ENCODE measurements at regions of chr7 and their contacts with region 1.

Region 1: GRCh38 chr7:144127703-144128334 is 4.8 kb downstream of the OR2A14 start:
- DNase-seq: peak; percentile 70 to 87 (median 81)
- ATAC-seq: peak; percentile 99
- H3K4me3 ChIP-seq: no peak overlapping the region
- H3K4me3 Mint-ChIP-seq: no peak overlapping the region
- H3K27ac ChIP-seq: no peak overlapping the region
- H3K27ac Mint-ChIP-seq: no peak overlapping the region
- H3K4me1 ChIP-seq: no peaks in the 10 kb centered on the region
- H3K4me1 Mint-ChIP-seq: no peaks in the 10 kb centered on the region
- H3K27me3 ChIP-seq: no peaks in the 10 kb centered on the region
- H3K27me3 Mint-ChIP-seq: peaks cover 0 to 7% (median 0%) of the 10 kb centered on the region in 5 donors

Region 2: GRCh38 chr7:143490717-143491306 is 637.0 kb before region 1 on chr7:
- CTCF ChIA-PET with region 1: no interaction called
- POLR2A ChIA-PET with region 1: no interaction called
- intact Hi-C with region 1: loop called in 1 of 2 experiments (anchors 5 kb)
- DNase-seq: no peak
- ATAC-seq: no peak
- H3K4me3 ChIP-seq: no peak overlapping the region
- H3K4me3 Mint-ChIP-seq: no peak overlapping the region
- H3K27ac ChIP-seq: no peak overlapping the region
- H3K27ac Mint-ChIP-seq: peak overlapping the region in 1 of 9 donors; percentile 6
- H3K4me1 ChIP-seq: no peaks in the 10 kb centered on the region
- H3K4me1 Mint-ChIP-seq: peaks cover 8 to 31% (median 21%) of the 10 kb centered on the region in 7 donors
- H3K27me3 ChIP-seq: no peaks in the 10 kb centered on the region
- H3K27me3 Mint-ChIP-seq: peaks cover 0 to 2% (median 0%) of the 10 kb centered on the region in 5 donors

Region 3: DNA sequence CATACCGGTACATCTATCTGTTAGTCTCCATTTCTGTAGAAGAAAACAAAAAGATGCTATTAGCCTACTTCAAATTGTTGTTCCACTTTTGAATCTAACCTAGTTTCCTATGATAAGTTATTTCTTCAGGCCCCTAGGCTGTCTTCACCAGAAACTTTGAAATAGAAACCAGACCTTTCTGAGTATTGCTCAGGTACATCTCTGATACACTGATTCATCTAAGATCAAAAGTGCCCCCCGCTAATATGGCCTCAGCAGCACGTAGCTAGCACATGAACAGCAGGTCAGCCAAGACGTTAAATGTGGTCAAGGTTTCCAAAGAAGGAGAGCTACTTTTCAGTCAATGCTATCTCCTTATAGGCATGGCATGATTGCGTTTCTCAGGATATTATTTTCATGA is 393.9 kb before region 1 on chr7:
- CTCF ChIA-PET with region 1: interaction called, 6 read pairs
- POLR2A ChIA-PET with region 1: no interaction called
- intact Hi-C with region 1: loop called in 1 of 2 experiments (anchors 1 kb)
- DNase-seq: no peak
- ATAC-seq: no peak
- H3K4me3 ChIP-seq: no peak overlapping the region
- H3K4me3 Mint-ChIP-seq: no peak overlapping the region
- H3K27ac ChIP-seq: no peak overlapping the region
- H3K27ac Mint-ChIP-seq: no peak overlapping the region
- H3K4me1 ChIP-seq: peaks cover 0 to 5% of the 10 kb centered on the region in 2 donors
- H3K4me1 Mint-ChIP-seq: peaks cover 5 to 14% (median 6%) of the 10 kb centered on the region in 7 donors
- H3K27me3 ChIP-seq: no peaks in the 10 kb centered on the region
- H3K27me3 Mint-ChIP-seq: no peaks in the 10 kb centered on the region

Region 4: DNA sequence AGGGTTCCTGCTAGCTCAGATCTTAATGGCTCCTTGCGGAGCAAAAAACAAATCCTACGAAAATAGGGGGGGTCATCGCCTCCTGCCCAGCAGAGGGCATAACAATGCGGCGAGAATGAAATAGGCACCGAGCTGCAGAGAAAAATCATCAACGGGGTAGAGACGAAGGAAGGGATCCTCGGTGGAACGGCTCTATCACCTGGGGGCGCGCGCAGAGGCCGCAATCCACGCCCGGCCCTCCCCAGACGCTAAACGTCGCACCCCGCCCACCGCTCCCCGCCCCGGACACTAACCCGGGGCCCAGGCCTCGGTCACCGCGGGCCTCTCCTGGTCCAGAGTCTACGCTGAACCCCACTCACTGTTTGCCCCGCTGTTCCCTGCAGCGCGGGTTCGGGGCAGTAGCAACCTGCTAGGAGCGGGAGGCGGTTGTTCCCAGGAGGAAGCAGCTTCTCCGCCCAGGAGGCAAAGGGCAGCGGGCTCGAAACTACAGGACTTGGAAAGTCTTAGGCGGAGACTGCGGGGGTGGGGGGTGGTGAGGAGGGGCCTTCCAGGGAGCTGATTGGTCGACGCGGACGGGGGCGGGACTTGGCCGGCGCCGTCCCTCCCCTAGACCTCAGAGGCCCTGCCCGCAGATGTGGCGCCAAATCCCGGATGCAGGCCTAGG is 226.0 kb before region 1 on chr7 and contains the start of gene TCAF1:
- CTCF ChIA-PET with region 1: interaction called, 25 read pairs
- POLR2A ChIA-PET with region 1: interaction called, 3 read pairs
- intact Hi-C with region 1: loop called (anchors 1 kb)
- DNase-seq: peak; percentile 72 to 89 (median 84)
- ATAC-seq: peak; percentile 98
- H3K4me3 ChIP-seq: peak within 1 kb of the TSS; percentile 92
- H3K4me3 Mint-ChIP-seq: peak within 1 kb of the TSS; percentile 91 to 98 (median 96)
- H3K27ac ChIP-seq: peak within 1 kb of the TSS; percentile 82
- H3K27ac Mint-ChIP-seq: peak within 1 kb of the TSS; percentile 79 to 95 (median 89)
- H3K4me1 ChIP-seq: peaks cover 4 to 10% of the 10 kb centered on the region in 2 donors
- H3K4me1 Mint-ChIP-seq: peaks cover 10 to 54% (median 42%) of the 10 kb centered on the region in 7 donors
- H3K27me3 ChIP-seq: no peaks in the 10 kb centered on the region
- H3K27me3 Mint-ChIP-seq: no peaks in the 10 kb centered on the region
- total RNA-seq, gene TCAF1: 10.5 to 19.4 (median 13.8) TPM

Region 5: GRCh38 chr7:144063710-144064109 is 64.1 kb before region 1 on chr7:
- CTCF ChIA-PET with region 1: interaction called, 3 read pairs
- POLR2A ChIA-PET with region 1: no interaction called
- intact Hi-C with region 1: loop called in 1 of 2 experiments (anchors 2 kb)
- DNase-seq: no peak
- ATAC-seq: no peak
- H3K4me3 ChIP-seq: no peak overlapping the region
- H3K4me3 Mint-ChIP-seq: no peak overlapping the region
- H3K27ac ChIP-seq: no peak overlapping the region
- H3K27ac Mint-ChIP-seq: no peak overlapping the region
- H3K4me1 ChIP-seq: no peaks in the 10 kb centered on the region
- H3K4me1 Mint-ChIP-seq: no peaks in the 10 kb centered on the region
- H3K27me3 ChIP-seq: no peaks in the 10 kb centered on the region
- H3K27me3 Mint-ChIP-seq: peaks cover 8 to 40% (median 25%) of the 10 kb centered on the region in 5 donors

Region 6: GRCh38 chr7:144100607-144101006 is 27.2 kb before region 1 on chr7:
- CTCF ChIA-PET with region 1: no interaction called
- POLR2A ChIA-PET with region 1: no interaction called
- intact Hi-C with region 1: no loop called
- DNase-seq: peak in 5 of 9 donors; percentile 5 to 25 (median 11)
- ATAC-seq: no peak
- H3K4me3 ChIP-seq: no peak overlapping the region
- H3K4me3 Mint-ChIP-seq: peak overlapping the region in 5 of 10 donors; percentile 19 to 56 (median 44)
- H3K27ac ChIP-seq: no peak overlapping the region
- H3K27ac Mint-ChIP-seq: peak overlapping the region in 4 of 9 donors; percentile 3 to 69 (median 38)
- H3K4me1 ChIP-seq: peaks cover 0 to 6% of the 10 kb centered on the region in 2 donors
- H3K4me1 Mint-ChIP-seq: peaks cover 0 to 42% (median 32%) of the 10 kb centered on the region in 7 donors
- H3K27me3 ChIP-seq: no peaks in the 10 kb centered on the region
- H3K27me3 Mint-ChIP-seq: peaks cover 0 to 10% (median 5%) of the 10 kb centered on the region in 5 donors

Measured in naive thymus-derived CD4-positive, alpha-beta T cell (primary cell).